ENCODE measurements at regions of chr2 and their contacts with region 1.

Region 1: GRCh38 chr2:69618362-69618761 is 25.2 kb downstream of the AAK1 start:
- DNase-seq: no peak
- ATAC-seq: no peak
- H3K4me3 ChIP-seq: no peak overlapping the region
- H3K27ac ChIP-seq: no peak overlapping the region
- H3K4me1 ChIP-seq: peaks cover 4 to 21% of the 10 kb centered on the region in 2 experiments; a peak in 4 of 5 replicates
- H3K27me3 ChIP-seq: no peaks in the 10 kb centered on the region
- CTCF ChIP-seq: no peak
- EP300 ChIP-seq: no peak
- POLR2A ChIP-seq: no peak
- RAD21 ChIP-seq: no peak

Region 2: DNA sequence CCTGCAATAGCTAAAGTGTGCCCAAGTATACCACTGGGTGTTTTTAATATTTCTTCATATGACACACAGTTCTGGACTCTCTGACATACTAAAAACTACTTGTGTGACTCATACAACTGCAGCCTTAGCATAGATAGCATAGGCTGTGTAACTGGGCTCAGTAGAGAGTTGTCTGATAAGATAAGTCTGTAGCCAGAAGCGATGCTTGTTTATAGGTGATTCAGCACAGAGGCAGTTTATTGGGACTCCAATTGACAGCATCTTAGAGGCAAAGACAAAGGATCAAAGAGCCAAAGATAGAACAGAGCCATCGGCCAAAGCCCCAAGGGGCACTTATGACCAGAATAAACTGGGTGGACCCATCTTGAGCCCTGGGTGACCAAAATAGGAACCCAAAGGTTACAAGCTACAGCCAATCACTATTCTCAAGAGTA is 17.2 kb before region 1 on chr2:
- CTCF ChIA-PET with region 1: no interaction called
- POLR2A ChIA-PET with region 1: interaction called, 11 read pairs
- in situ Hi-C with region 1: no loop called
- intact Hi-C with region 1: no loop called
- DNase-seq: peak; percentile 80 to 87 (median 84)
- ATAC-seq: peak; percentile 90
- H3K4me3 ChIP-seq: no peak overlapping the region
- H3K27ac ChIP-seq: peak overlapping the region; percentile 75
- H3K4me1 ChIP-seq: peaks cover 6 to 51% of the 10 kb centered on the region in 2 experiments
- H3K27me3 ChIP-seq: no peaks in the 10 kb centered on the region
- CTCF ChIP-seq: no peak
- EP300 ChIP-seq: peak; percentile 92
- POLR2A ChIP-seq: no peak
- RAD21 ChIP-seq: no peak; a peak in 1 of 4 replicates